ENCODE measurements at regions of chr1 and their contacts with region 1.

Region 1: DNA sequence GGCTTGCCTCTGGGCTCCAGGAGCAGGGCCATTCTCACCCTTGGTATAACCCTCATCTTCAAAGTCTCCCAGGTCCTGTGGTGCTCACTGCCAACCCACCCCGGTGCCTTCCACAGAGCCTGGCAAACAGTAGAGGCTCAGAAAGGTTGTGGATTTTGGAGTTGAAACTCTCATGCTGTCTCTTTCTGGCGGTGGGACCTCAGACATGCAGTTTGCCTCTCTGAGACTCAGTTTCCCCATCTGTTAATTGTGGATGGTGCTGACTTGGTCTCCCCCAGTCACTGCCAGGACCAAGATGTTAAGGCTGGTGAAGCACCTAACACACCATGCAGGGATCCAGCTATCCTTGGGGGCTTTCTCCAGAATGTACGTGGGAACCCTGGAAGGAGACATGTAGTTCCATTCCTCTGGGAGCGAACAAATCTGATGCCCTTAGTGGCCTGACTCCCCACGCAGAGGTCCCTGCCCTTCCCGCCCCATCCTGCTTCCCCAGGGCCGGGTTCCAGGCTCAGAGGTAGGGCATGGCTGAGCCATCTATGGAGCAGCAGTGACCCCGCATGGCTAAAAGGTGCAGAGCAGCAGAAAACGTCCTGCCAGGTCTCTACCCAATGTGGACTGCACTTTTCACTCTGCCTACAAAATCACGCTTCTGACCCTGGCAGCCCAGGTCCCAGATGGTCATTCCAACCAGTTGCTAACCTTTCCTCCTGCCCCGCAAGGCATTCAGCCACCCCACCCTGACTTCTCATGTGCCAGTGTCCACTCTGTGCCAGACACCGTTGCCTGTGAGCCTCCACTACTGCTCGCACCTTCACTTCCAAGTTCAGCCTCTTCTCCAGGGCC is 9.2 kb upstream of the TTC22 start:
- DNase-seq: peak; percentile 68 to 79
- ATAC-seq: peak; percentile 37 to 46 (median 46)
- H3K4me3 ChIP-seq: no peak overlapping the region
- H3K4me3 Mint-ChIP-seq: peak overlapping the region; percentile 40
- H3K27ac ChIP-seq: no peak overlapping the region
- H3K27ac Mint-ChIP-seq: peak overlapping the region; percentile 94 to 95
- H3K4me1 ChIP-seq: peaks cover 76% of the 10 kb centered on the region
- H3K4me1 Mint-ChIP-seq: peaks cover 55 to 64% of the 10 kb centered on the region in 2 donors
- H3K27me3 ChIP-seq: no peaks in the 10 kb centered on the region
- H3K27me3 Mint-ChIP-seq: no peaks in the 10 kb centered on the region
- CTCF ChIP-seq: peak; percentile 87

Region 2: DNA sequence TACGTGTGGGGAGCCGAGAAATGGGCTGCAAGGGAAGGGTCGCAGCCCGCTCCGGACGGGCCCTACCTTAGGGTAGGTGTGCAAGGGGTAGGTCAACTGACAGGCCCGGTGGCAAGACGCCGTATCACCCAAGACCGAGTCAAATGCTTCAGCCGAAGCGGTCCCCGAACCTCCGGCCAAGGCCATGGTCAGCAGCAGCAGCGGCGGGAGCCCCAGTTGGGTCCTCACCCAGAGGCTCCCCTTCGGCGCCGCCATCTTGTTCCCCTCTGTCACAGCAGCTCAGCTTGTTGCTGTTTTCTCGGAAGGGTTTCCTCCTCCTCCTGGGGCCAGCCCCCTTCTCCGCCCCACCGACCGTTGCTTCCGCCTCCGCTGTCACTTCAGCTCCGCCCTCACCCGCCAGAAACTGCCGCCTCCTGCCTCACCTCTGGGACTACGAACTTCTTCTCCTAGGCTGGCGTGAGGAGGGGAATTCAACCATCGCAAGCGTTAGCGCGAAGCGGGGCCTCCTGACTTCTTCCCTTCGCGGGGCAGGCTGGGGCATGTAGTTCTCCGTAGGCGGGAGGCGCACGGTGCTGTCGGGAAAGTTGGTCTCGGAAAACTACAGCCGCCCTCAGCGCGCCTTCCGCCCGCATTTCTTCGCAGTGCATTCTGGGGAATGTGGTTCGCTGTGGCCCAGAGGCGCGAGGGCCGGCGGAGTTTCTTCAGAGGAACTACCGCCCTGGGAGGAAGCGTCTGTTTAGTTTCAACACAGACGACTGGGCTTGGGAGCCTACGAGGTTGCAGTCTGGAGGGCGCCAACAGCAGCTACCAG is 757.2 kb before region 1 on chr1 and contains the starts of genes TCEANC2 and TMEM59:
- intact Hi-C with region 1: loop called (anchors 1 kb)
- DNase-seq: peak; percentile 93 to 99
- ATAC-seq: peak; percentile 88 to 96 (median 90)
- H3K4me3 ChIP-seq: peak within 1 kb of the TSS; percentile 88
- H3K4me3 Mint-ChIP-seq: no peak within 1 kb of the TSS
- H3K27ac ChIP-seq: peak within 1 kb of the TSS; percentile 84
- H3K27ac Mint-ChIP-seq: no peak within 1 kb of the TSS
- H3K4me1 ChIP-seq: peaks cover 33% of the 10 kb centered on the region
- H3K4me1 Mint-ChIP-seq: peaks cover 23 to 24% of the 10 kb centered on the region in 2 donors
- H3K27me3 ChIP-seq: no peaks in the 10 kb centered on the region
- H3K27me3 Mint-ChIP-seq: no peaks in the 10 kb centered on the region
- CTCF ChIP-seq: no peak
- total RNA-seq, gene TCEANC2: 5.1 to 9.5 (median 7.3) TPM
- total RNA-seq, gene TMEM59: 187 to 202 (median 199) TPM

Region 3: GRCh38 chr1:54499360-54500106 is 310.8 kb before region 1 on chr1:
- intact Hi-C with region 1: loop called (anchors 5 kb)
- DNase-seq: peak in 1 of 2 donors; percentile 65
- ATAC-seq: peak; percentile 51 to 84 (median 70)
- H3K4me3 ChIP-seq: no peak overlapping the region
- H3K4me3 Mint-ChIP-seq: peak overlapping the region; percentile 69
- H3K27ac ChIP-seq: no peak overlapping the region
- H3K27ac Mint-ChIP-seq: no peak overlapping the region
- H3K4me1 ChIP-seq: peaks cover 14% of the 10 kb centered on the region
- H3K4me1 Mint-ChIP-seq: peaks cover 0 to 10% of the 10 kb centered on the region in 2 donors
- H3K27me3 ChIP-seq: peaks cover 15% of the 10 kb centered on the region
- H3K27me3 Mint-ChIP-seq: peaks cover 31 to 54% of the 10 kb centered on the region in 2 donors
- CTCF ChIP-seq: peak; percentile 20

Region 4: GRCh38 chr1:54671985-54672608 is 138.2 kb before region 1 on chr1:
- intact Hi-C with region 1: loop called (anchors 1 kb)
- DNase-seq: peak; percentile 68 to 78
- ATAC-seq: peak; percentile 89 to 99 (median 98)
- H3K4me3 ChIP-seq: no peak overlapping the region
- H3K4me3 Mint-ChIP-seq: no peak overlapping the region
- H3K27ac ChIP-seq: no peak overlapping the region
- H3K27ac Mint-ChIP-seq: peak overlapping the region in 1 of 2 donors; percentile 29
- H3K4me1 ChIP-seq: peaks cover 4% of the 10 kb centered on the region
- H3K4me1 Mint-ChIP-seq: peaks cover 10 to 11% of the 10 kb centered on the region in 2 donors
- H3K27me3 ChIP-seq: no peaks in the 10 kb centered on the region
- H3K27me3 Mint-ChIP-seq: no peaks in the 10 kb centered on the region
- CTCF ChIP-seq: peak; percentile 89

Region 5: GRCh38 chr1:54715493-54716298 is 94.6 kb before region 1 on chr1 and contains the start of gene TTC4:
- intact Hi-C with region 1: loop called (anchors 2 kb)
- DNase-seq: peak; percentile 84 to 92
- ATAC-seq: peak; percentile 97 to 98 (median 98)
- H3K4me3 ChIP-seq: peak within 1 kb of the TSS; percentile 91
- H3K4me3 Mint-ChIP-seq: peak within 1 kb of the TSS; percentile 86
- H3K27ac ChIP-seq: peak within 1 kb of the TSS; percentile 56
- H3K27ac Mint-ChIP-seq: peak within 1 kb of the TSS; percentile 76 to 79
- H3K4me1 ChIP-seq: peaks cover 12% of the 10 kb centered on the region
- H3K4me1 Mint-ChIP-seq: peaks cover 25 to 29% of the 10 kb centered on the region in 2 donors
- H3K27me3 ChIP-seq: no peaks in the 10 kb centered on the region
- H3K27me3 Mint-ChIP-seq: peaks cover 3 to 5% of the 10 kb centered on the region in 2 donors
- CTCF ChIP-seq: no peak
- total RNA-seq, gene TTC4: 7.8 to 13.6 (median 10.0) TPM

Region 6: GRCh38 chr1:54764133-54764921 is 46.0 kb before region 1 on chr1 and contains the start of gene PARS2:
- intact Hi-C with region 1: loop called (anchors 1 kb)
- DNase-seq: peak; percentile 92 to 99
- ATAC-seq: peak; percentile 89 to 97 (median 93)
- H3K4me3 ChIP-seq: peak within 1 kb of the TSS; percentile 68
- H3K4me3 Mint-ChIP-seq: peak within 1 kb of the TSS; percentile 94
- H3K27ac ChIP-seq: peak within 1 kb of the TSS; percentile 76
- H3K27ac Mint-ChIP-seq: peak within 1 kb of the TSS; percentile 96 to 97
- H3K4me1 ChIP-seq: peaks cover 16% of the 10 kb centered on the region
- H3K4me1 Mint-ChIP-seq: peaks cover 48 to 53% of the 10 kb centered on the region in 2 donors
- H3K27me3 ChIP-seq: no peaks in the 10 kb centered on the region
- H3K27me3 Mint-ChIP-seq: no peaks in the 10 kb centered on the region
- CTCF ChIP-seq: no peak
- total RNA-seq, gene PARS2: 0.95 to 1.4 (median 0.96) TPM